SK-N-SH (cell line): ENCODE measurements at regions of chr1 and their contacts with region 1.

Region 1: GRCh38 chr1:206982216-206982615 is 12.0 kb upstream of the FCAMR start:
- DNase-seq: peak; percentile 58
- H3K4me3 ChIP-seq: no peak overlapping the region
- H3K27ac ChIP-seq: no peak overlapping the region
- H3K4me1 ChIP-seq: no peaks in the 10 kb centered on the region
- H3K27me3 ChIP-seq: peaks cover 46% of the 10 kb centered on the region; the same call in 1 of the 2 replicates
- CTCF ChIP-seq: peak; percentile 62
- EP300 ChIP-seq: no peak
- RAD21 ChIP-seq: peak; percentile 85

Region 2: GRCh38 chr1:206612129-206612876 is 369.9 kb before region 1 on chr1 and contains the start of gene EIF2D:
- CTCF ChIA-PET with region 1: interaction called, 12 read pairs
- POLR2A ChIA-PET with region 1: no interaction called
- DNase-seq: peak; percentile 100
- H3K4me3 ChIP-seq: peak within 1 kb of the TSS; percentile 81 to 94
- H3K27ac ChIP-seq: peak within 1 kb of the TSS; percentile 83 to 90
- H3K4me1 ChIP-seq: peaks cover 0 to 8% of the 10 kb centered on the region in 2 experiments; a peak in 2 of 4 replicates
- H3K27me3 ChIP-seq: no peaks in the 10 kb centered on the region
- CTCF ChIP-seq: peak; percentile 77
- EP300 ChIP-seq: peak in 1 of 2 experiments; percentile 44; a peak in 1 of 4 replicates
- RAD21 ChIP-seq: no peak
- polyA plus RNA-seq, gene EIF2D: 59.5 and 83.2 TPM in 2 replicates

Region 3: GRCh38 chr1:206725109-206725963 is 256.9 kb before region 1 on chr1:
- CTCF ChIA-PET with region 1: interaction called, 29 read pairs
- POLR2A ChIA-PET with region 1: no interaction called
- DNase-seq: peak; percentile 67
- H3K4me3 ChIP-seq: no peak overlapping the region; a peak in 1 of 4 replicates
- H3K27ac ChIP-seq: no peak overlapping the region
- H3K4me1 ChIP-seq: peaks cover 0 to 10% of the 10 kb centered on the region in 2 experiments; a peak in 1 of 4 replicates
- H3K27me3 ChIP-seq: no peaks in the 10 kb centered on the region
- CTCF ChIP-seq: peak; percentile 65
- EP300 ChIP-seq: no peak
- RAD21 ChIP-seq: peak; percentile 52

Region 4: GRCh38 chr1:206960676-206961386 is 21.4 kb before region 1 on chr1:
- CTCF ChIA-PET with region 1: interaction called, 13 read pairs
- POLR2A ChIA-PET with region 1: no interaction called
- DNase-seq: no peak
- H3K4me3 ChIP-seq: no peak overlapping the region
- H3K27ac ChIP-seq: no peak overlapping the region
- H3K4me1 ChIP-seq: no peaks in the 10 kb centered on the region
- H3K27me3 ChIP-seq: peaks cover 22% of the 10 kb centered on the region; the same call in 1 of the 2 replicates
- CTCF ChIP-seq: peak; percentile 18; the same call in 1 of the 2 replicates
- EP300 ChIP-seq: no peak
- RAD21 ChIP-seq: no peak

Region 5: DNA sequence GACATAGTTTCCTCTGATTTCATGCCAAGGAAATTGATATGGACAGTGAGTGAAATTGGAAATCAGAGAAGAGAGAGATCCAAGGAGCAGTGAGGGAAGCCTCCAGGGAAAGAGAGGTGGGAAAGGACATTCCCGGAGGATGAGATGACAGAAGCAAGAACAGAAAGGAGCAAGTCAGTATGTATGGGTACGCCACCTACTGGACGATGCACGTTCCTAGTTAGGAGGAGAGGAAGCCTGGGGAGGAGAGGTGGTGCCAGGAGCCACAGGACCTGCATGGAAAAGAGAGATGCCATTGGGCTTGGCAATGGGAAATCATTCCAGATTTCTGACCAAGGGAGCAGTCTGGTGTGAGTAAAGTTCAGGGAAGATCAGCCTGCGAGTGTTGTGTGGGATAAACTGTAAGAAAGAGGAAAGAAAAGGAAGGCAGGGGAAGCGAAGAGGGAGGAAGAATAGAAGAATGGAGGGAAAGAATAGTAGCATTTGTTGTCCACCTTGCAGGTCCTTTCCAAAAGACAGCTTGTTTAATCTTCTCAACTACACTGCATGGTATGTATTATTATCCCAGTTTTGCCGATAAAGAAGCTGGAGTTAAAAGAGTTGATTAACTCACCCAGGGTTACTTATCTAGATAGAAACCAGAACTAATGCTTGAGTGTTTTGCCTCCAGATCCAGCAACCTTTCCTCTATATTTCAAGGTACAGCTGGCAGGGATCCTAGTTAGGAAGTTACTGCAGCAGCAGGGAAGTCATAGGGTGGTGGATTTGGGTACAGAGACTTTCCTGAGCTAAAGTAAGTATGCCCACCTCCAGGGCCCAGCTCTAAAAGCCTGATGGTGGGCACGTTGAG is 23.0 kb after region 1 on chr1:
- CTCF ChIA-PET with region 1: interaction called, 39 read pairs
- POLR2A ChIA-PET with region 1: interaction called, 3 read pairs
- DNase-seq: peak; percentile 51
- H3K4me3 ChIP-seq: no peak overlapping the region
- H3K27ac ChIP-seq: no peak overlapping the region
- H3K4me1 ChIP-seq: peaks cover 6 to 10% of the 10 kb centered on the region in 2 experiments; a peak in 2 of 4 replicates
- H3K27me3 ChIP-seq: no peaks in the 10 kb centered on the region
- CTCF ChIP-seq: peak; percentile 74
- EP300 ChIP-seq: no peak
- RAD21 ChIP-seq: 0 out of 2 replicates have a peak, but pooled peaks have one; percentile 31